WTC11 (cell line): ENCODE measurements at regions of chr2 and their contacts with region 1.

Region 1: DNA sequence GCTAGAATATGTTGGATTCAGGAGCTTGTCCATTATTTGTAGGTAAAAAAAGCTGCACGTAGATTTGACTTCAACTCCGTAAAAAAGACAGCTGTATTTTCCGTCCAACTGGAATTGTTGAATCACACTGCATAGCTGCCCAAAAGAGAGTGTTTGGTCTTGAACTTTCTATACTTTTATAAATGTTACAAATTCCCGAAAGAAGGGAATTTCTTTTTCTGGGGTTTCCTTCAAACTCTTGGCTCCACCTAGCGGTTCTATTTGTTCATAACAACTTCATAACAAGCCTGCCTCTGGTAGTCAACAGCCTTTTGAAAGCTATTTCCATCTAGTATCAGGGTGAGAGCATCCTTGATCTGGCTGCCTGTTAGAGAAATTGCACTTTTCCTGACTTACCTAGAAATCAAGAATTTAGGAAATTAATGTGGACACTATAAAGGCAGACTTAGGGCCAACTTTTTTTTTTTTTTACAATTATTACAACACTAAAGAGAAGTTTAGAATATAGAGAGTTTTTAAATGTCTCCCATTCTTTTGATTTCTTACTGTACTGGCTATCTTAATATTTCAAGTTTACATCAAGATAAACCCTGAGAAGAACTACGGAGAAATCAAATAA is 48.1 kb downstream of the TMEM185B start:
- DNase-seq: no peak
- ATAC-seq: peak; percentile 25; the same call in 1 of the 2 replicates
- H3K4me3 Mint-ChIP-seq: no peak overlapping the region
- H3K27ac Mint-ChIP-seq: no peak overlapping the region
- H3K4me1 Mint-ChIP-seq: peaks cover 28% of the 10 kb centered on the region
- H3K27me3 Mint-ChIP-seq: no peaks in the 10 kb centered on the region
- CTCF ChIP-seq: peak; percentile 74

Region 2: DNA sequence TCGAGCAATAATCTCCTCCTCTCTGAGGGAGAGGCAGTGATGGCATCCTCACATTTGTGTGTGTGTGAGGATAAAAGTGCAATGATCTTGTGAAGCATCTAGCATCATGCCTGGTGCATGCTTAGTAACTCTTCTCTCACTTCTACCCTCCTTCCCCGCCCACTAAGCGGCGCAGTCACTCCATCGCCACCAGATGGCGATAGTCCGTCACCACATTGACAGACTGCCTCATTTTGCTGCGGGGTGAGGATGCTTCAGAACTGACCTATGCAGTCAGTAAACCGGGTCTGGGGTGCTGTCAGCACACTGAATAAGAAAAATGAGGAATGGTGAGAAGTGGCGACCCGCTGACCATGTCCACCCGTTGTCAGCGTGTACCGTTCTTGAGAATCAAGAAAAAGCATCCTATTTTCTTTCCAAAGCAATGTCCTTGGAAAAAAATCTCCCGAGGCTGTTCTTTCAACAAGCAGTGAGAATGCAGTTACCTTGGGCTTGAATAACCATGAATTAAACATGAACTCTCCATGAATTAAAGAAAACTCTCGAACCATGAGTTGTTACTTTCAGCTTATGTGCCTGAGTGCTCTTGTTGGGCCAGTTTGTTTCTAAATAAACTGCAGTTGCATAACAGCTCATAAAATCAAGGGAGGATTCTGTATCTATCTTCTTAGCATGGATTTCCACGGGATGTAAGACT is 533.4 kb before region 1 on chr2:
- CTCF ChIA-PET with region 1: interaction called, 11 read pairs
- POLR2A ChIA-PET with region 1: no interaction called
- DNase-seq: peak; percentile 85
- ATAC-seq: peak; percentile 93
- H3K4me3 Mint-ChIP-seq: no peak overlapping the region
- H3K27ac Mint-ChIP-seq: no peak overlapping the region
- H3K4me1 Mint-ChIP-seq: peaks cover 29% of the 10 kb centered on the region
- H3K27me3 Mint-ChIP-seq: no peaks in the 10 kb centered on the region; the same call in 1 of the 2 replicates
- CTCF ChIP-seq: peak; percentile 80

Region 3: DNA sequence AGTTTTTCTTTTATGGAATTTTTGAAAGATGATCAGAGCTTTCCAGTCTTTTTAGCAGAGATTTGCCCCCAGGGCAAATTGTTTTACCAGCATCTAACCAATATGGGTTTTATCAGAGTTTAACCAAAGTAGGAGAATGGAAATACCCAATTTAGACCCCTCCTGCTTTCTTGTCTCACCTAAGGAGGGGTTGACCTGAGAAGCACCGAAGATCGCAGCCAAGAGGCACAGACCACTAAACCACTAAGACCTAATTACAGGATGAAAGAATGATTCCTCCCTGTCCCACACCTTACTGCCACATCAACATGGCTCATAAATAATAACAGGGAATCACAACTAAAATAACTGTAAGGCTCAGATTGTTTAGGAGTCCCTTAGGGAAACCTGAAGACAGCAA is 274.1 kb before region 1 on chr2:
- CTCF ChIA-PET with region 1: no interaction called
- POLR2A ChIA-PET with region 1: no interaction called
- DNase-seq: no peak
- ATAC-seq: no peak
- H3K4me3 Mint-ChIP-seq: no peak overlapping the region
- H3K27ac Mint-ChIP-seq: no peak overlapping the region
- H3K4me1 Mint-ChIP-seq: peaks cover 15% of the 10 kb centered on the region
- H3K27me3 Mint-ChIP-seq: no peaks in the 10 kb centered on the region
- CTCF ChIP-seq: no peak

Region 4: DNA sequence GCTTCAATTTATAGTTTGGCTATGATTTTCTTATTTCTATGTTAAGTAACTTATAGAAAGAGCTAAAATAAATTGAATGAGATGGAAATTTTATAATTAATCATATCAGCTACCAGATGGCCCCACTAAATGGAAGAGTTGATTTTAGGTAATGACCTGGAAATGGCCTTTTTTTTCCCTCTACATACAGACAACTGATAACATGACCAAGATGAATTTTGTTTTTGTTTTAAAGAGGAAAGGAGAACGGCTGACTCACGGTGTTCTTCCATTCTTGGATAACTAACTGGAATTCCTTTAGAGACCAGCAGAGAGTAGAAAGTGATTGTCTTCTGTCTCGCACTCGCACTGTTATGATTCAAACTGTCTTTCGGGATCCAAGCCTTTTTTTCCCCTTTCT is 42.9 kb before region 1 on chr2:
- CTCF ChIA-PET with region 1: interaction called, 12 read pairs
- POLR2A ChIA-PET with region 1: no interaction called
- DNase-seq: no peak
- ATAC-seq: no peak
- H3K4me3 Mint-ChIP-seq: no peak overlapping the region
- H3K27ac Mint-ChIP-seq: no peak overlapping the region
- H3K4me1 Mint-ChIP-seq: peaks cover 6% of the 10 kb centered on the region
- H3K27me3 Mint-ChIP-seq: no peaks in the 10 kb centered on the region
- CTCF ChIP-seq: no peak